Endothelial cell of umbilical vein (primary cell): ENCODE measurements at regions of chr17 and their contacts with region 1.

Region 1: GRCh38 chr17:82297714-82298537 is 19.5 kb downstream of the CD7 start:
- DNase-seq: peak; percentile 84
- H3K4me3 ChIP-seq: peak overlapping the region in 2 of 3 experiments; percentile 32 to 43
- H3K27ac ChIP-seq: peak overlapping the region; percentile 93
- H3K4me1 ChIP-seq: peaks cover 41% of the 10 kb centered on the region
- H3K27me3 ChIP-seq: no peaks in the 10 kb centered on the region
- CTCF ChIP-seq: no peak
- POLR2A ChIP-seq: peak; percentile 73

Region 2: DNA sequence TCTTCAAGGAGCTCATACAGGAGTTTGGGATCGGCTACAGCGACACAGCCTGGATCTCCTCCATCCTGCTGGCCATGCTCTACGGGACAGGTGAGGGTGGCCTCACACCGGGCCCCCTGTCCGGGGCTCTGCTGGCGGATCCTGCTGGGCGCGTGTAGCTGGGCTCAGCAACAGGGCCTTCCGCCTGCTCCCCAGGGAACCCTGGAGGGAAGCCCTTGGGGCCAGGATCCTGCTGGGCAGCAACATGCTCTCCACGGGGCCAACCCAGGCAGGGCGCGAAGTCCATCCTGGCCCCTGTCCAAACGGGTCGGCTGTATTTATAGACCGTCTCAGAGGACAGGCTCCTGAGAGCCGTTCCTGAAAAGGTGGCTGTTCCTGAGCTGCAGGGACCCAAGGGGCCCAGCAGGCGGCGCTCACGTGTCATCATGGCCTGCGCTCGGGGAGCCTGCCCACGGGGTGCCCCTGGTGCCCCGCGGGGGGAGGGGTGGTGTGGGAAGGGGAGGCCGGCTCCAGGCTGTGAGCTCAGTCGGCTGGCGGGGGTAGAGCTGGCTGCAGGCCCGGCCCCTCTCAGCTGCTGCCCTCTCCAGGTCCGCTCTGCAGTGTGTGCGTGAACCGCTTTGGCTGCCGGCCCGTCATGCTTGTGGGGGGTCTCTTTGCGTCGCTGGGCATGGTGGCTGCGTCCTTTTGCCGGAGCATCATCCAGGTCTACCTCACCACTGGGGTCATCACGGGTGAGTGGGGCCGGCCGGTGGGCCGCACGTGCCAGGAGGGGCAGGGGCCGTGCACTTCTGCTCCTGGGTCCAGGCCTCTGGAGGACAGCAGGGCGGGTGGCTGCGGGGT is 61.6 kb before region 1 on chr17:
- CTCF ChIA-PET with region 1: interaction called, 6 read pairs
- POLR2A ChIA-PET with region 1: interaction called, 3 read pairs
- dilution Hi-C with region 1: no loop called
- intact Hi-C with region 1: loop called (anchors 2 kb)
- DNase-seq: peak; percentile 45
- H3K4me3 ChIP-seq: no peak overlapping the region
- H3K27ac ChIP-seq: no peak overlapping the region
- H3K4me1 ChIP-seq: peaks cover 21% of the 10 kb centered on the region
- H3K27me3 ChIP-seq: no peaks in the 10 kb centered on the region
- CTCF ChIP-seq: peak; percentile 80 to 91
- POLR2A ChIP-seq: no peak

Region 3: GRCh38 chr17:82320956-82321927 is 23.3 kb after region 1 on chr17:
- CTCF ChIA-PET with region 1: interaction called, 26 read pairs
- POLR2A ChIA-PET with region 1: no interaction called
- dilution Hi-C with region 1: no loop called
- intact Hi-C with region 1: loop called (anchors 1 kb)
- DNase-seq: no peak
- H3K4me3 ChIP-seq: no peak overlapping the region
- H3K27ac ChIP-seq: no peak overlapping the region
- H3K4me1 ChIP-seq: no peaks in the 10 kb centered on the region
- H3K27me3 ChIP-seq: no peaks in the 10 kb centered on the region
- CTCF ChIP-seq: peak; percentile 71 to 74
- POLR2A ChIP-seq: no peak

Region 4: GRCh38 chr17:82332669-82333278 is 34.8 kb after region 1 on chr17:
- CTCF ChIA-PET with region 1: interaction called, 10 read pairs
- POLR2A ChIA-PET with region 1: no interaction called
- dilution Hi-C with region 1: no loop called
- intact Hi-C with region 1: loop called (anchors 5 kb)
- DNase-seq: peak; percentile 8
- H3K4me3 ChIP-seq: peak overlapping the region in 1 of 3 experiments; percentile 37
- H3K27ac ChIP-seq: no peak overlapping the region
- H3K4me1 ChIP-seq: peaks cover 9% of the 10 kb centered on the region
- H3K27me3 ChIP-seq: peaks cover 0 to 2% of the 10 kb centered on the region in 2 experiments
- CTCF ChIP-seq: no peak
- POLR2A ChIP-seq: no peak

Region 5: GRCh38 chr17:82338858-82339633 is 41.1 kb after region 1 on chr17:
- CTCF ChIA-PET with region 1: interaction called, 6 read pairs
- POLR2A ChIA-PET with region 1: no interaction called
- dilution Hi-C with region 1: no loop called
- intact Hi-C with region 1: loop called (anchors 5 kb)
- DNase-seq: peak; percentile 59
- H3K4me3 ChIP-seq: peak overlapping the region in 2 of 3 experiments; percentile 12 to 21
- H3K27ac ChIP-seq: peak overlapping the region; percentile 2
- H3K4me1 ChIP-seq: peaks cover 16% of the 10 kb centered on the region
- H3K27me3 ChIP-seq: no peaks in the 10 kb centered on the region
- CTCF ChIP-seq: no peak
- POLR2A ChIP-seq: peak; percentile 19

Region 6: GRCh38 chr17:82418001-82418986 is 120.4 kb after region 1 on chr17 and contains the starts of genes HEXD and OGFOD3:
- CTCF ChIA-PET with region 1: interaction called, 3 read pairs
- POLR2A ChIA-PET with region 1: no interaction called
- dilution Hi-C with region 1: no loop called
- intact Hi-C with region 1: loop called (anchors 5 kb)
- DNase-seq: peak; percentile 81
- H3K4me3 ChIP-seq: peak within 1 kb of the TSS; percentile 58 to 90 (median 70)
- H3K27ac ChIP-seq: no peak within 1 kb of the TSS
- H3K4me1 ChIP-seq: peaks cover 12% of the 10 kb centered on the region
- H3K27me3 ChIP-seq: no peaks in the 10 kb centered on the region
- CTCF ChIP-seq: no peak
- POLR2A ChIP-seq: peak; percentile 76
- total RNA-seq, gene HEXD: 12.8 and 12.9 TPM in 2 replicates
- total RNA-seq, gene OGFOD3: 34.8 and 37.1 TPM in 2 replicates